Activated T-helper 1 cell treated with anti-CD3 and anti-CD28 coated beads, Interleukin-12 subunit alpha, Interleukin-12 subunit beta, Interleukin-2, Interleukin-4 antibody, amounts not matched to agents 30 ng/mL and 10 ng/mL and 1 ng/mL, durations not matched to agents 14 hours and 24 hours and 36 hours (primary cell): ENCODE measurements at regions of chr4 and their contacts with region 1.

Region 1: GRCh38 chr4:81405894-81406401 is 65.8 kb downstream of the RASGEF1B start:
- DNase-seq: peak; percentile 25
- H3K4me3 Mint-ChIP-seq: no peak overlapping the region
- H3K27ac Mint-ChIP-seq: no peak overlapping the region
- H3K4me1 Mint-ChIP-seq: peaks cover 8% of the 10 kb centered on the region
- H3K27me3 Mint-ChIP-seq: peaks cover 8% of the 10 kb centered on the region

Region 2: GRCh38 chr4:81844717-81845116 is 438.8 kb after region 1 on chr4:
- intact Hi-C with region 1: loop called (anchors 1 kb)
- DNase-seq: peak; percentile 46
- H3K4me3 Mint-ChIP-seq: no peak overlapping the region
- H3K27ac Mint-ChIP-seq: no peak overlapping the region
- H3K4me1 Mint-ChIP-seq: peaks cover 4% of the 10 kb centered on the region
- H3K27me3 Mint-ChIP-seq: peaks cover 7% of the 10 kb centered on the region

Region 3: GRCh38 chr4:81913427-81913879 is 507.5 kb after region 1 on chr4:
- intact Hi-C with region 1: loop called (anchors 5 kb)
- DNase-seq: peak; percentile 28
- H3K4me3 Mint-ChIP-seq: no peak overlapping the region
- H3K27ac Mint-ChIP-seq: no peak overlapping the region
- H3K4me1 Mint-ChIP-seq: peaks cover 9% of the 10 kb centered on the region
- H3K27me3 Mint-ChIP-seq: peaks cover 8% of the 10 kb centered on the region

Region 4: DNA sequence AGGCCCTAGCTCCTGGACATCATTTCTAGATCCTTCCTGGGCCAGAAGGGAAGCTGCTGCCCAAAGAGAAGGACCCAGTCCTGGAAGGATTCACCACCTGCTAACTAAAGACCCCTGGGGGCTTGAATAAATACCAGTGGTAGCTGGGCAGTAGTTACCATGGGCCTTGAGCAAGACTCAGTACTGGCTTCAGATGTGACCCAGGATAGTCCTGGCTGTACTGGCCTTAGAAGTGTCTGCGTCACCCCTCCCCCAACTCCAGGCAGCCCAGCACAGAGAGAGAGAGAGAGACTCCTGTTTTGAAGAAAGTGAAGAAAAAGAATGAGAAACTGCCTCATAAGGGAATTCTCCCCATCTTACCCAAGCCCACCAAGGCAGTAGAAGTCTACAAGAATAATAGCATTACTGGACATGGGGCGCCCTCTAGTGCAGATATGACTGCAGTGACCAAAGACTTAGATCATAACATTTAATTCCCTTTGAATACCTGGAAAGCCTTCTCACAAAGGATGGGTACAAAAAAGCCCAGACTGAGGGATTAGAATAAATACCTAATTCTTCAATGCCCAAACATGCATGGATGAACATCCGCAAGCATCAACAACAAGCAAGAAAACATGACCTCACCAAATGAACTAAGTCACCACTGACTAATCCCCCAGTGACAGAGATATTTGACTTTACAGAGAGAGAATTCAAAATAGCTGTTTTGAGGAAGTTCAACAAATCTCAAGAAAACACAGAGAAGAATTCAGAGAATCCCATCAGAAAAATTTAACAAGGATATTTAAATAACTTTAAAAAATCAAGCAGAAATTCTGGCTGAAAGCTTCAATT is 796.1 kb after region 1 on chr4:
- intact Hi-C with region 1: loop called (anchors 1 kb)
- DNase-seq: no peak
- H3K4me3 Mint-ChIP-seq: no peak overlapping the region
- H3K27ac Mint-ChIP-seq: no peak overlapping the region
- H3K4me1 Mint-ChIP-seq: no peaks in the 10 kb centered on the region
- H3K27me3 Mint-ChIP-seq: peaks cover 8% of the 10 kb centered on the region

Region 5: DNA sequence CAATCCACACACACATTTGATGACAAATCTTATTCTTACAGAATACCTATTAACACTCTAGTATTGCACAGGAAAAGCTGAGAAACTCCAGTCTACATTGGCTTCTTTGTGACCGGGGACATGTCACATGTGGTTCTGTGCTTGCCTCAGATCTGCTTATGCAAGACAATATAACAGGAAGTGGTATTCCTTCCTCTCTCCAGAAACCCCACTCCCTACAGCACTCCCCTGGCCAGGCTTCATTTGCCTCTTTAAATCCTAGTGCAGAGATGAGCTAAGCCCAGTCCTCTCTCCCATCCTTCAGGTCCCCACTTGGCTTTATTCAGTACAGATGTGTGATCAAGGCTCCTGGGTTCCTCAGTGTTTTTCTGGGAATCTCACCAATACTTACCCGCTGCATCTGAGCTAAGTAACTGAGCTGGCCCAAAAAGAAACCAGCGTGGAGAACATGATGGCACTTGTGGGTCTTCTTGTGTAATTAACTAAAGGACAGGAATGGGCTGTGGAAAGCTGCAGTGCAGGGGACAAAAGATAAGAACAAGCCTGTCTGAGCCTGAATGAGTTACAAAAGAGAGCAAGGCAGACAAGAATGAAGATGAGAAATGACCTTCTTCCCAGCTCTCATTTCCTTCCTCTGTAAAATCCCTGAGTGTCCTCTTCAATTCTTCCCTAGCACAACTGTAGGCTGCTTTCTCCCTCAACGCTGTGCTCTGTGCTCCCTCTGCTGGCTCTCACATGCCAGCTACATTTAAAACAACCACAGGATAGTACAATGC is 862.3 kb after region 1 on chr4:
- intact Hi-C with region 1: loop called (anchors 1 kb)
- DNase-seq: peak; percentile 20
- H3K4me3 Mint-ChIP-seq: no peak overlapping the region
- H3K27ac Mint-ChIP-seq: peak overlapping the region; percentile 6
- H3K4me1 Mint-ChIP-seq: peaks cover 10% of the 10 kb centered on the region
- H3K27me3 Mint-ChIP-seq: peaks cover 7% of the 10 kb centered on the region

Region 6: DNA sequence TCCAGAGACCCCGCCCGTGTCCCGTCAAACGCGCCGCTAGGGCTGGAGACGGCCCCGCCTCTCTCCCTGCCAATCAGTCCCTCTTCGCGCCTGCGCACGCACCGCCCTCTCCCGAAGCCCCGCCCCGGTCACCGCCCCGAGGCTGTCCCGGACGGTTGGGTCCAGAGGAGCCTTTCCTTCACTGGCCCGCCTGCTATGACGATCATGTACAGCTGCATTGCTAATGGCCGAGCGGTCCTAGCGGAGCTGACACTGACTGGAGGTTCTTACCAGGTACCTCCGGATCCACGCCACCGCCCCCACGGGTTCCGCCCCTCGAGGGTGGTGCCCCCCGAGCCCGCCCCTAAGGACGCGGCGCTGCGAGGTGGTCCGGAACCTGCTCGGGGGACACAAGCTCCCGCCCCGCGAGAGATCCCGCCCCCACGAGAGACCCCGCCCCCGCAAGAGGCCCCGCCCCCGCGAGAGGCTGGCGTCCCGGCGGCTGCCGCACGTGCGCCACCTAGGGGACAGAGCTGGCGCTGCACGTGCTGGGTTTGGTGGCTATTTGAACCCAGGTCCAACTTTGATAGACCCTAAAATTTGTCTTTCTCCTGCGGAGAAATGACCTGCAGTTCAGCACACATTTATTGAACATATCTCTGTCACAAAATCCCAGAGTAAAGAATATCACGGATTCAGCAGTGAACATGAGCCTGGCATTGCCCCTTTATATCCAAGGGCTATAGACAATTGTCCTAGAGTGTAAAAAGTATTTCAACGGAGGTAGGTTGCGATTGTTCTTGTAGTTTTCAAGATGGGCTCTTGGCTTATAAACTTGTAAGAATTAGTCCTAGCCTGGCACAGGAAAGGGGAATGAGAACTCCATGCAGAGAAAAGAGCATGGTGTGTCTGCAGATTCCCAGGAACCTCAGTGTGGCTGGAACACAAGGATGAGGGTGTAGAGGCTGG is 879.2 kb after region 1 on chr4:
- intact Hi-C with region 1: loop called (anchors 1 kb)
- DNase-seq: peak; percentile 99
- H3K4me3 Mint-ChIP-seq: peak overlapping the region; percentile 80
- H3K27ac Mint-ChIP-seq: peak overlapping the region; percentile 27
- H3K4me1 Mint-ChIP-seq: peaks cover 14% of the 10 kb centered on the region
- H3K27me3 Mint-ChIP-seq: peaks cover 24% of the 10 kb centered on the region

Region 7: GRCh38 chr4:82360298-82361177 is 954.6 kb after region 1 on chr4:
- intact Hi-C with region 1: loop called (anchors 2 kb)
- DNase-seq: no peak
- H3K4me3 Mint-ChIP-seq: no peak overlapping the region
- H3K27ac Mint-ChIP-seq: peak overlapping the region; percentile 57
- H3K4me1 Mint-ChIP-seq: peaks cover 83% of the 10 kb centered on the region
- H3K27me3 Mint-ChIP-seq: no peaks in the 10 kb centered on the region